ENCODE measurements at regions of chr14 and their contacts with region 1.

Region 1: DNA sequence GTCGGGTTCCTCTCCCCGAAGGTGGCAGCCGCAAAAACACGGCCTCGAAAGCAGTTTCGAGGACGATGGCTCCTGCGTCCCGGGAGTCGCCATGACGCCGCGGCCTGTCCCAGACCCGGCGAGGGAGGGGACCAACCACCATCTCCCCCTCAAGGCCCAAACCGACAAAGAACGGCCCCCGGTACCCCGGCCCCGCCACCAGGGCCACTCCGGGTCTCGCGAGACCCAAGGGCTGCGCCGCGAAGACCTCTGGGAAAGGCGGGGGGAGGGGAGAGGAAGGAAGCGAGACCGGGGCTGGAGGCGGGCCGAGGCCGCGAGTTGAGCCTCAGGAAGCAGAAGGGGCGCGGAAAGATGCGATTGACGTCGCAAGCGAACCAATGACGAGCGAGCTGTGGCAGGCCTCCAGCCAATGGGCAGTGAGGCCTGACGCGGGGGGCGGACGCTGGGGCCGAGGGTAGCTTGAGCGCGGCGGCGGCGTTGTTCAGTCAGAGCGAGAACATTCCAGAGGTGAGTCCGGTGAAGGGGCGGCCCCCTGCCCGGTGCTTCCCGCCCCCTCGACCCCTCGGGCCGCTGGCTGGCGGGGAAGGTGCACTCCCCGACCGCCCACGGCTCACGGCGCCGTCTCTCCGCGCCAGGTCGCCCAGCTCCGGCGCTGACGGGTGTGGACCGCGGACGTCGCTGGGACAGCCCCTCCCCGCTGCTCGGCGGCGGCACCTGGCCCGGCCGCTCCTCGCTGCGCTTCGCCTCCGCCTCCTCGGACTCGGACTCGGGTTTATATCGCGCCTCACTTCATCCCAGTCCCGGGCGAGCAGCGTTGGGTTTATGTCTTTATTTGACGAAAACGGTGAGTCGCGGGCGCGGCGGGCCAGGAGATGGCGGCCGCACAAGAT is at the start of gene EIF5:
- DNase-seq: peak; percentile 97 to 100 (median 99)
- ATAC-seq: peak; percentile 86
- H3K4me3 ChIP-seq: peak within 1 kb of the TSS; percentile 85 to 92
- H3K4me3 Mint-ChIP-seq: peak within 1 kb of the TSS; percentile 97
- H3K27ac ChIP-seq: peak within 1 kb of the TSS; percentile 95 to 96
- H3K27ac Mint-ChIP-seq: peak within 1 kb of the TSS; percentile 99
- H3K4me1 ChIP-seq: peaks cover 23% of the 10 kb centered on the region
- H3K4me1 Mint-ChIP-seq: peaks cover 41% of the 10 kb centered on the region
- H3K27me3 ChIP-seq: no peaks in the 10 kb centered on the region
- H3K27me3 Mint-ChIP-seq: no peaks in the 10 kb centered on the region
- CTCF ChIP-seq: peak; percentile 38
- total RNA-seq, gene EIF5: 711 to 754 TPM

Region 2: DNA sequence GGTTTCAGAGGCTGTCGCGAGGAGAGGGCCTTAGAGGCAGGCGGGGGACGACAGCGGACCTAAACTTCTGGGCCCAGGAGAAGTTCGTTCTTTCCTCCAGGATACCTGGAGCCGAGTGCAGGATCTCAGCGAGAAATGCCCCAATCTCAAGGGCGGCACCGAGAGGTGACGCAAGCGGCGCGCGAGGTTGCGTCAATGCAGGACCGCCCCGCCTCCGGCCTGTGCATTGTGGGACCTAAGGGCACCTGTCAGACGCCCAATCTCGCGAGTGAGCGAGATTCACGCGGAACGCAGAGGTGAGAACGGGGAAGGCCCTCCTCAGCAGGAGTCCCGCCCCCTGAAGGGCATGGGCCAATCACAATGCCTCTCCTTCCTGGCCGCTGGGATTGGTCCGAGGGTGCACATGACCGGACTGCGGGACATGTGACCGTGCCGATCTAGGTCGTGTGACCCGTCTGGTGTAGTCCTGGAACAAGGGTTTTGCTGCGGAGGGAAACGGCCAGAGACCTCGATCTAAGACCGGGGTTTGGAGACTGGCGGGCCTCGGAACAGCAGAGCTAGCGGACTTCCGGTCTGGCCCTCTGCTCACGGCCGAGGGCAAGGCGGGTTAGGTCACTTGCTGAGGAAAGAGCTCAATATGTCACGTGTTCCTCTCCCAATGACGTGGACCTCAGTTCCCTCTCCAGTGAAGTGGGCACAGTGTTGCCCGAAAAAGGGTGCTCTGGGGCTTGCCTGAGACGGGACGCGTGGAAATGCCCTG is 1385.9 kb before region 1 on chr14:
- CTCF ChIA-PET with region 1: no interaction called
- POLR2A ChIA-PET with region 1: no interaction called
- intact Hi-C with region 1: loop called in 1 of 2 experiments (anchors 5 kb)
- DNase-seq: peak; percentile 98 to 100 (median 99)
- ATAC-seq: peak; percentile 95
- H3K4me3 ChIP-seq: peak overlapping the region; percentile 81 to 82
- H3K4me3 Mint-ChIP-seq: peak overlapping the region; percentile 93
- H3K27ac ChIP-seq: peak overlapping the region; percentile 95 to 100
- H3K27ac Mint-ChIP-seq: peak overlapping the region; percentile 99
- H3K4me1 ChIP-seq: peaks cover 14% of the 10 kb centered on the region
- H3K4me1 Mint-ChIP-seq: peaks cover 20% of the 10 kb centered on the region
- H3K27me3 ChIP-seq: peaks cover 0 to 6% of the 10 kb centered on the region in 2 experiments
- H3K27me3 Mint-ChIP-seq: peaks cover 23% of the 10 kb centered on the region
- CTCF ChIP-seq: no peak

Region 3: DNA sequence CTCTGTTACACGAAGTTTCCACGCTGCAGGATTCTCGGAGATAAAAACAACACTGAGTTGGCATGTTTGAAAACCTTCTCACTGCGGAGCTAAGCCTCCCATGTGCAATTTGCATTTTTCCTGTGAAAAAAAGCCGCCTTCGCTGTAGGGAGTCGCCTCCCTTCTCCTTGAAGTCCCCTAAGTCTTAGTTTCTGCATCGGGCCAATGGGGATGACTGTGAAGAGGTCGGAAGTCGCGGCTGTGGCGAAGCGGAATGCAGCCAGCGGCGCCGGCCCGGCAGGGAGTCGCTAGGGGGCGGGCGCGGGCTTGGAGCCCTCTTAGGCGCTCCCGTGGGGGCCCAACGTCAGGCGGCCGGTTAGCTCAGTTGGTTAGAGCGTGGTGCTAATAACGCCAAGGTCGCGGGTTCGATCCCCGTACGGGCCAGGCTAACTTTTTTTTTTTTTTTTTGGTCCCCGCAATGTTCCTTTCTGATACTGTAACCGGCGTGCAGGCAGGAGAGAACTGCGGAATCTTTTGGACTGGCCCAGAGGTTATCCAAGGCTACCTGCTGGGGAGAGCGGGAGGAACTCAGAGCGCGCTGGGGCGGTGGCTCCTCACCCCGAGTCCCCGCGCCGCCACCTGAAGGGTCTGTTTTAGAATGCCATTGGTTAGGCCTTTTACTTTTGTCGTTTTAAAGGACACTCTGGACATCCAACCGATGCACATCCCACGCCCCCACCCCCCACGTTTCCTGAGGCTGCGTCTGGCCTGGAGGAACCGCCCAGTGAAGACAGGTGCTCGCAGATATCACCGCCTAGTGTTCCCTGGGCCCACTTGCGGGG is 1017.0 kb before region 1 on chr14:
- CTCF ChIA-PET with region 1: no interaction called
- POLR2A ChIA-PET with region 1: no interaction called
- intact Hi-C with region 1: loop called in 1 of 2 experiments (anchors 10 kb)
- DNase-seq: peak; percentile 86 to 100 (median 95)
- ATAC-seq: peak; percentile 55
- H3K4me3 ChIP-seq: peak overlapping the region; percentile 57 to 74
- H3K4me3 Mint-ChIP-seq: peak overlapping the region; percentile 93
- H3K27ac ChIP-seq: peak overlapping the region; percentile 42 to 73
- H3K27ac Mint-ChIP-seq: peak overlapping the region; percentile 94
- H3K4me1 ChIP-seq: peaks cover 42% of the 10 kb centered on the region
- H3K4me1 Mint-ChIP-seq: peaks cover 59% of the 10 kb centered on the region
- H3K27me3 ChIP-seq: no peaks in the 10 kb centered on the region
- H3K27me3 Mint-ChIP-seq: no peaks in the 10 kb centered on the region
- CTCF ChIP-seq: peak; percentile 82

Region 4: DNA sequence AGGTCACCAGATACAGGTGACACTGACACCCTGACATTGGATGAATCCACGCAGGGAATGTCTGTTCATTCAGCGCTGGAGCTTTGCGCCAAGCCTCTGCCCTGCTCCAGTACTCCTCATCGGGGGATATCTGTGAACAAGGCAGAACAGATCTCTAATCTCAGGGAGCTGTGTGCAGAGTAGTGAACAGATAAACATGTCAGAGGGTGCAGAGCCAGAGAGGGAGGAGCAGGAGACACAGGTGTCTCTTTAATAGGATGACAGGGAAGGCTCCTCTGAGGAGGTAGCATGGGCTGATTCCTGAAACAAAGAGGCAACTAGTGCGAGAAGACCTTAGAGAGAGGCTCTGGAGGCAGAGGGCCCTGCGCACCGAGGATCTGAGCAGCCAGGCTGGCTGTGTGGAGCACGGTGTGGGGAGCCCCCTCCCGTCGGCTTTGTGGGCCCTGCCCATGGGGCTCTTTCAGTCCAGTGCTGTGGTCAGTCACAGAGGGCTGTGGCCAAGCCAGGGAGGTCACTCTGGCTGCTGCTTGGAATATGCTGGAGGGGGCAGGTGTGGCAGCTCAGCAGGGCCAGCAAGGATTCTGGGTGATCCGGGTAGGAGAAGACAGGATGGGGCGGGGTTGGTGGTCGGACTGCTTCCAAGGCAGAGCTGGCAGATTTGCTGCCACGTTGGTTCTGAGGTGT is 915.7 kb before region 1 on chr14:
- CTCF ChIA-PET with region 1: no interaction called
- POLR2A ChIA-PET with region 1: no interaction called
- intact Hi-C with region 1: no loop called
- DNase-seq: no peak
- ATAC-seq: no peak
- H3K4me3 ChIP-seq: no peak overlapping the region
- H3K4me3 Mint-ChIP-seq: no peak overlapping the region
- H3K27ac ChIP-seq: no peak overlapping the region
- H3K27ac Mint-ChIP-seq: no peak overlapping the region
- H3K4me1 ChIP-seq: no peaks in the 10 kb centered on the region
- H3K4me1 Mint-ChIP-seq: no peaks in the 10 kb centered on the region
- H3K27me3 ChIP-seq: no peaks in the 10 kb centered on the region
- H3K27me3 Mint-ChIP-seq: no peaks in the 10 kb centered on the region
- CTCF ChIP-seq: no peak

Region 5: DNA sequence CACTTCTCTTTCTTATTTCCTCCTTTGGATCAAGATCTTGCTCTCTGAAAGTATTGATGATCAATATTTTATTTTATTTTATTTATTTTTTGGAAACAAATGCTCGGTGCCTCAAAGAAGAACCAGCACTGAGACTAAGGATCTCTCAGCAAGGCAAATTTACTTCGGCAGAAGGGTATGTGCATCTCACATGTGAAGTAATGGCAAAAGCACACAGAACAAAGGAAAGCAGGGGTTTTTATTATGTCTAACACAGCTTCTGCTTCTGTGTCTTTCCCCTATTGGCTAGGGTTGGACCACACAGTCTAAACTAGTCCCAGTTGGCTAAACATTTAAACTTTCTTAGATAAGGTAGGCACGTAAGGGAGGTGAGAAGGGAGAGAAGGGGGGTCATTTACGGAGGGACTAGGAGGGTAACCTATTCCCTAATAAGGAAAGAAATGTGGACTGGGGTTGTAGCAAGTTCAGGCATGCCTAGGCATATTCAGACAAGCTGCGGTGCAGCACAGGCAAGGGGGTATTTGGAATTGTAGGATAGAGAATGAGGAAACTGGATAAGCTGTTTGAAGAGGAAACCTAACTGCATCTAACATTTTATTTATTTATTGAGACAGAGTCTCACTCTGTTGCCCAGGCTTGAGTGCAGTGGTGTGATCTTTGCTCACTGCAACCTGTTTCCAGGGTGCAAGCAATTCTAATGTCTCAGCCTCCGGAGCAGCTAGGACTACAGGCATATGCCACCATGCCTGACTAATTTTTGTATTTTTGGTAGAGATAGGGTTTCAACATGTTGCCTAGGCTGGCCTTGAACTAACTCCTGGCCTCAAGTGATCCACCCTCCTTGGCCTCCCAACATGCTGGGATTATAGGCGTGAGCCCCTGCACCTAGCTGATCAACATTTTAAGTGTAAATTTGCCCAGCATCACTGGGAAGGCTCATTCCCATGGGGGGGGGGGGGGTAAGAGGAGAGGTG is 89.9 kb before region 1 on chr14:
- CTCF ChIA-PET with region 1: no interaction called
- POLR2A ChIA-PET with region 1: no interaction called
- intact Hi-C with region 1: no loop called
- DNase-seq: no peak
- ATAC-seq: no peak
- H3K4me3 ChIP-seq: no peak overlapping the region
- H3K4me3 Mint-ChIP-seq: no peak overlapping the region
- H3K27ac ChIP-seq: no peak overlapping the region
- H3K27ac Mint-ChIP-seq: no peak overlapping the region
- H3K4me1 ChIP-seq: no peaks in the 10 kb centered on the region
- H3K4me1 Mint-ChIP-seq: no peaks in the 10 kb centered on the region
- H3K27me3 ChIP-seq: no peaks in the 10 kb centered on the region
- H3K27me3 Mint-ChIP-seq: peaks cover 37% of the 10 kb centered on the region
- CTCF ChIP-seq: no peak

Region 6: DNA sequence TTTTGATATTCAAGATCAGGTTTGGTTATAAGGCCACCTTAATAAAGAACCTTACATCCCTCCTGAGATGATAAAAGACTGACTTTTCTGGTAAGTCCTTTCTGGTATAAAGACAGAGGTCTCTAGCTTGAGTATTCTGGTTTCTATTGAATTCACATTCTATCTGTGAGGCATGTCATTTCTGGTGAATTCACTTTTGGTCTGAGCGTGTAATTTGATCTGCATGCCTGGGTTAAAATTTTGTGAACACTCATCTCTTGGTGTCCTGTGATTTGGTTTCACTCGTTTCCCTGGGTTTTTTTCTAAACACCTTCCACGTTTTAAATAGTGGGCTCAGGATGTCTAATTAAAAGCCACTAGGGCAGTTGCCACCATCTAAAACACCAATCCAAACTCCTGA is 12.3 kb after region 1 on chr14:
- CTCF ChIA-PET with region 1: no interaction called
- POLR2A ChIA-PET with region 1: interaction called, 39 read pairs
- intact Hi-C with region 1: no loop called
- DNase-seq: no peak
- ATAC-seq: no peak
- H3K4me3 ChIP-seq: no peak overlapping the region
- H3K4me3 Mint-ChIP-seq: no peak overlapping the region
- H3K27ac ChIP-seq: no peak overlapping the region
- H3K27ac Mint-ChIP-seq: no peak overlapping the region
- H3K4me1 ChIP-seq: no peaks in the 10 kb centered on the region
- H3K4me1 Mint-ChIP-seq: peaks cover 12% of the 10 kb centered on the region
- H3K27me3 ChIP-seq: no peaks in the 10 kb centered on the region
- H3K27me3 Mint-ChIP-seq: no peaks in the 10 kb centered on the region
- CTCF ChIP-seq: no peak

Region 7: GRCh38 chr14:103562429-103563225 is 228.6 kb after region 1 on chr14 and contains the starts of genes BAG5 and COA8:
- CTCF ChIA-PET with region 1: no interaction called
- POLR2A ChIA-PET with region 1: interaction called, 3 read pairs
- intact Hi-C with region 1: loop called (anchors 2 kb)
- DNase-seq: peak; percentile 68 to 92 (median 86)
- ATAC-seq: peak; percentile 81
- H3K4me3 ChIP-seq: peak within 1 kb of the TSS; percentile 96 to 97
- H3K4me3 Mint-ChIP-seq: peak within 1 kb of the TSS; percentile 83
- H3K27ac ChIP-seq: peak within 1 kb of the TSS; percentile 81 to 86
- H3K27ac Mint-ChIP-seq: peak within 1 kb of the TSS; percentile 87
- H3K4me1 ChIP-seq: peaks cover 46% of the 10 kb centered on the region
- H3K4me1 Mint-ChIP-seq: peaks cover 62% of the 10 kb centered on the region
- H3K27me3 ChIP-seq: no peaks in the 10 kb centered on the region
- H3K27me3 Mint-ChIP-seq: no peaks in the 10 kb centered on the region
- CTCF ChIP-seq: no peak
- total RNA-seq, gene BAG5: 46.2 to 46.3 TPM
- total RNA-seq, gene COA8: 11.6 to 13.4 TPM

Region 8: DNA sequence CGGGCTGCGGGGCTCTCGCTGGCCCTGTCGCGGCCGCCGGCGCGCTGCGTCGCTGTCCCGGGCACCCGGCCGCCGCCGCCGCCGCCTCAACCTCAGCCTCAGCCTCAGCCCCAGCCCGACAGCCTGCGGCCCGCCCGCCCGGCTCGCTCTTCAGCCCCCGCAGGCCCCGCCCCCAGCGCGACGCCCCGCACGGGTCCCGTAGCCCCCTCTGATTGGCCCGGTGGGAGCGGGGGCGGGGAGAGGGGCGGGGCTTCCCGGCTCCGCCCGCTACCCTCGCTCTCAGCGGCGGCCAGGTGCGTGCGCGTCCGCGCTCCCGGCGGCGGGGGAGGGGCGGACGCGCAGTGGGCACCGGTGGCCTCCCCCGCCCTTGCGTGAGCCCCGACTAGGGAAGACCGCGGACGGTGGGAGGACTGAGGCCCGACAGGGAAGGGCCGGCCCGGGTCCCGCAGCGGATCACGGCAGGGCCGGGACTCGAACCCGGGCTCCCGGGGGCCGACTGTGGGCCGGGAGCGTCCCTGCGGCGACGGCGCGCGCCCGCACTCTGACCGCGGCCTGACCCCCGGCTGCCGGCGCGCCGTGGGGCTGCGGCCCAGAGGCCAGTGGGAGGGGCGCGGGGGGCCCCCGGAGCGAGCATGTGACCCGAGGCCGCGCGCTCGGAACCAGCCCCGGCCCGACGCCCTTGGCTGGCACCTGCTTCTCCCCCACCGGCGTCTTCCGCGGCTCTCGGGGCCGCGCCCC is 513.6 kb after region 1 on chr14 and contains the start of gene PPP1R13B:
- CTCF ChIA-PET with region 1: no interaction called
- POLR2A ChIA-PET with region 1: no interaction called
- intact Hi-C with region 1: loop called in 1 of 2 experiments (anchors 5 kb)
- DNase-seq: peak; percentile 88 to 97 (median 92)
- ATAC-seq: peak; percentile 98
- H3K4me3 ChIP-seq: peak within 1 kb of the TSS; percentile 65 to 73
- H3K4me3 Mint-ChIP-seq: peak within 1 kb of the TSS; percentile 90
- H3K27ac ChIP-seq: peak within 1 kb of the TSS in 1 of 2 experiments; percentile 27
- H3K27ac Mint-ChIP-seq: peak within 1 kb of the TSS; percentile 74
- H3K4me1 ChIP-seq: peaks cover 14% of the 10 kb centered on the region
- H3K4me1 Mint-ChIP-seq: peaks cover 20% of the 10 kb centered on the region
- H3K27me3 ChIP-seq: no peaks in the 10 kb centered on the region
- H3K27me3 Mint-ChIP-seq: no peaks in the 10 kb centered on the region
- CTCF ChIP-seq: no peak
- total RNA-seq, gene PPP1R13B: 20.9 to 22.6 TPM